ENCODE measurements at regions of chr15 and their contacts with region 1.

Region 1: DNA sequence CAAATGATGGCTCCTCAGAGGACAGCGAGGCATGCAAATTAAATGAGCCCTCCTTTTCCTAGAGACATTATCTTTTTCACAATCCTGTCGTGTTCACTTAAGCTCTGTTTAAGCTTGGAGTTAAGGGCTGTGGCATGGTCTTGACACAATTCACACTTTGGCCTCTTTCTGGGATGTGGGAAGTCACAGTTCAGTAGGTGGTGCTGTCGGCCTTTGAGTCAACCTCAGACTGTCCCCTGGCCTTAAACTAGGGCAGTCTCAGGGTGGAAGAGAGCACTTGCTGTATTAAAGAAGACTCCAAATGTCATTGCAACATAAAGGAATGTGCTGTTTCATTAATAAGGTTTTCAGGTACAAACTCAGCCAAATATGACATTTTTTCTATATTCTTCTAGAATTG is 351.0 kb downstream of the MCTP2 start:
- DNase-seq: no peak

Region 2: DNA sequence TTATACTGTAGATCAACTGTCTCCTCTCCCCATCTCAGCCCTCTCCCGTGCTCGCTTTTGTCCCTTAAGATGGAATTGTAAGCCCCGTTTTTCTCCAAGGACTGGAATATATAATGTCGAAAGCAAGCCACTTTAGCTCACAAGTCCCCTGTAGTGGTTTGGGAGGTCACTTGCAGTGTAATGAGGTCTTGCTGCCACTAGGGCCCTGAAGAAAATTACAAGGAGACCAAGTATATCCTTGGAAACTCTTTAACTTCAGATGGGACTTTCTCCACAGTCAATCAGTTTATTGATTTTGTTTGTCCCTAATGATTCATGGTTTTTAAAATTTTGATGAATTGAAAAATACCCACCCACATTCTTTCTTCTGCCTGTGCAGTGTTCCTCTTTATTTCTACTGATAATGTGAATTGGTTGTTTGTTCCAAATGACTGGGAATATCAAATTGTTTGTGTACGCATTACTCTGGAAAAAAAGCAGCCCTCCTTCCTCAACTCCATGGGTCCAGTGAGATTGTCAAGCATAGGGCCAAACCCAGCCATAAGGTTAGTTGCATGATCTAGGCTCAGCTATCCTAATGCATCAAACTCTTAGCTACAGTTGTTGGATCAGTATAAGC is 56.2 kb before region 1 on chr15:
- intact Hi-C with region 1: no loop called
- DNase-seq: no peak

Region 3: GRCh38 chr15:95025924-95026728 is 443.8 kb after region 1 on chr15:
- intact Hi-C with region 1: loop called (anchors 10 kb)
- DNase-seq: no peak